Prostate gland (tissue), 2 donors: ENCODE measurements at regions of chr5 and their contacts with region 1.

Region 1: GRCh38 chr5:174311531-174312269 is 266.2 kb downstream of the NSG2 start:
- DNase-seq: peak; percentile 50
- H3K4me3 ChIP-seq: peak overlapping the region; percentile 11 to 35
- H3K27ac ChIP-seq: no peak overlapping the region
- H3K4me1 ChIP-seq: peaks cover 3% of the 10 kb centered on the region
- H3K27me3 ChIP-seq: peaks cover 6% of the 10 kb centered on the region
- CTCF ChIP-seq: peak; percentile 80 to 89 (median 86)
- POLR2A ChIP-seq: no peak

Region 2: GRCh38 chr5:173615884-173616576 is 695.7 kb before region 1 on chr5:
- intact Hi-C with region 1: loop called (anchors 2 kb)
- DNase-seq: peak; percentile 73
- H3K4me3 ChIP-seq: peak overlapping the region; percentile 73 to 93
- H3K27ac ChIP-seq: peak overlapping the region; percentile 91
- H3K4me1 ChIP-seq: peaks cover 13% of the 10 kb centered on the region
- H3K27me3 ChIP-seq: no peaks in the 10 kb centered on the region
- CTCF ChIP-seq: peak; percentile 26 to 67 (median 62)
- POLR2A ChIP-seq: no peak

Region 3: GRCh38 chr5:174045470-174046025 is 266.2 kb before region 1 on chr5 and contains the start of gene NSG2:
- intact Hi-C with region 1: loop called (anchors 2 kb)
- DNase-seq: peak; percentile 74
- H3K4me3 ChIP-seq: no peak within 1 kb of the TSS
- H3K27ac ChIP-seq: no peak within 1 kb of the TSS
- H3K4me1 ChIP-seq: no peaks in the 10 kb centered on the region
- H3K27me3 ChIP-seq: peaks cover 2% of the 10 kb centered on the region
- CTCF ChIP-seq: peak in 3 of 4 experiments; percentile 59 to 87 (median 65)
- POLR2A ChIP-seq: no peak
- total RNA-seq, gene NSG2: 0.74 TPM in 1 of 2 donors, not detected in the other